Uterus (tissue), 4 donors: ENCODE measurements at regions of chr12 and their contacts with region 1.

Region 1: DNA sequence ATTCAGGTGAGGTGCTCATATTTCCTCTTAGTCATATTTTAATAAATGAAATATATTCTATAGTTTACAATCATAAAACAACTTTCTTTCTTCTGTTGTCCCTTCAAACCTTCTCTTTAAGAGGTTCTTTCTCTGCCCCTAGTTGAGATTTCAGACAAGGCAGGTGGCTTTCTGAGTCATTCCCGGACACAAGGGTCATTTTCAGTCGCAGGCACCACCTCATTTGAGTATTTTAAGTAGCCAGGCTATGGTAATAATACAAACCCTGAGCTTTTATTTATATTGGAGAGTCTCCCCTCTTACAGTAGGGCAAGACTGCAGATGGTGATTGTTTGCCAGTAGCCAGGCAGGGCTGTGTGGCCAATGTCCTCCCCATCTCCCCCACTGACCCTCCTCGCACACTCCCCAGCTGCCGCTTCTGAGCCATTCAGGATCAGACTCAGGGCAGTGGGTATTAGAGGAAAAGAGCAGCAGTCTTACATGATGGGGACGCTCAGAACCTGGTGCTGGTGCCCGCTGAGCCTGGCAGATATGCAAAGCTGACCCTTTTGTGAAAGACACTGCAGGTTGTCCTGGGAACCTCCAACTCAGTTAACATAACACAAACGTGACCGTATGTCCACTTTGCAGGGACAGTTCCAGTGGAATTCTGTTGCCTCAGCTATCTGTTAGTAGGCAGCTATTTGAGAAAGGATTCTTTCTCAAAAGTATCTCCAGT is 101.1 kb upstream of the BCL2L14 start:
- DNase-seq: no peak
- H3K4me3 ChIP-seq: no peak overlapping the region
- H3K27ac ChIP-seq: no peak overlapping the region
- H3K4me1 ChIP-seq: no peaks in the 10 kb centered on the region
- H3K27me3 ChIP-seq: no peaks in the 10 kb centered on the region
- CTCF ChIP-seq: no peak
- POLR2A ChIP-seq: no peak

Region 2: DNA sequence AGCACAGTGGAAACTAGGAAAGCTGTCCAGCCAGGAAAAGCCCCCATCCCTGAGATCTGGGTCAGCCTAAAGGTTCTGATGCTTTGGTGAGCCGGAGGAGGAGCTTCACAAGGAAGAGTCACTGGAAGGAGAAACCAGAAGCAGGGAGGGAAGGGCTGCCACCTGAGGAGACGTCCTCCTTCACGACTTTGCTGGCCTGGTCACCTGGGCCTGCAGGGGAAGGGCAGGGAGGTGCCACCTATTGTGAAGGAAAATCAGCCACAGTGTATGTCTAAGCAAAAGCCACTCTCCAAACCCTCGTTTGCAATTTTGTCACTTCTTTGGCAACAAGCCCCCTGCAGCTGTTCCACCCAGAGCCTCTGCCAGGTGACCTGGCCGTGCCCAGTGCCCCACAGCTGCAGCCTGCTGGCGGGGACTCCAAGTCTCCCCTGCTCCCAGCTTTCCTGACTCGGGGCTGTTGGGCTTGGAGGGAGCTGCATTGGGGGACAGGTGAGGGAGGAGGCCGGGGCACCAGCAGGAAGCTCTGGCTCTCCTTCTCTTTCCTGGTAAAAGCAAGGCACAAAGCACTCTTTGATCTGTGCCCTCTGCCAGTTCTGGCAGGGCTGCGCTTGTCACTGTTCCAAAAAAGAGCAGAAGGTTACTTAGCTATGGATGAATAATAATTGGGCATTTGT is 19.7 kb before region 1 on chr12:
- intact Hi-C with region 1: no loop called
- DNase-seq: peak in 1 of 2 donors; percentile 18
- H3K4me3 ChIP-seq: no peak overlapping the region
- H3K27ac ChIP-seq: no peak overlapping the region
- H3K4me1 ChIP-seq: no peaks in the 10 kb centered on the region
- H3K27me3 ChIP-seq: no peaks in the 10 kb centered on the region
- CTCF ChIP-seq: no peak
- POLR2A ChIP-seq: no peak

Region 3: DNA sequence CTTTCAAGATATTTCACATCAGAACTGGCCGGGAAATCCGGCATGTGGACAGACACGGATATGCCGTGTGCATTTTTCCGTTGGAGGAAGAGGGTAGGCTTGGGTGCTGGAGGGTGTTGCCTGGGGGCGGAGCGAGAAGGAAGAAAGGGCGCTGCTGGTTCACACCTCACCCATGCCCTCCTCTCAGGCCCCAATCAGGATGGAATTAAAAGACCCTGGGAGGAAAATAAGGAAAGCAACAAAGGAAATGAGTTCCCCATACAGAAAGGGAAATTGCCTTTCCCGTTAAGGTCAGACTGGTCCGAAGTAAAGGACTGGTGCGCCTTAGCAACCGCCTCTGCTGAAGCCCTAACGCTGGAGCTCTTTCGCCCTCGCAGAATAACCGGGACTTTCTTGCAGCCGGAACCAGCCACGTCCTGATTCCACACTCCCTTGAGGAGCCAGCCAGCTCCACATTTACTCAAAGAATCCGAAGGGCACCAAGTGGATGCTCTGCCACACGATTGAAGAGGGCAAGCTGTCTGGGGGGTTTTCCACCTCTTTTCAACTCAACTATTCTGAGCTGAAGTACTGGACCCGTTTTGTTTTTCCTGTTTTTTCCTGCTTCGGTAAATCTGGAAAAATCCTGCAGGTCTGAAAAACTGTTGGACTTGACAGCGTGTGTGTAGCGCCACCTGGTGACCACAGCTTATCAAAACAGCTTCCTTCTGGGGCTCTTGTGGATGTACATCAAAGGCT is 63.4 kb after region 1 on chr12:
- intact Hi-C with region 1: no loop called
- DNase-seq: peak; percentile 75 to 77
- H3K4me3 ChIP-seq: peak overlapping the region; percentile 29
- H3K27ac ChIP-seq: peak overlapping the region; percentile 58 to 82
- H3K4me1 ChIP-seq: no peaks in the 10 kb centered on the region
- H3K27me3 ChIP-seq: no peaks in the 10 kb centered on the region
- CTCF ChIP-seq: peak; percentile 81 to 92 (median 88)
- POLR2A ChIP-seq: no peak

Region 4: DNA sequence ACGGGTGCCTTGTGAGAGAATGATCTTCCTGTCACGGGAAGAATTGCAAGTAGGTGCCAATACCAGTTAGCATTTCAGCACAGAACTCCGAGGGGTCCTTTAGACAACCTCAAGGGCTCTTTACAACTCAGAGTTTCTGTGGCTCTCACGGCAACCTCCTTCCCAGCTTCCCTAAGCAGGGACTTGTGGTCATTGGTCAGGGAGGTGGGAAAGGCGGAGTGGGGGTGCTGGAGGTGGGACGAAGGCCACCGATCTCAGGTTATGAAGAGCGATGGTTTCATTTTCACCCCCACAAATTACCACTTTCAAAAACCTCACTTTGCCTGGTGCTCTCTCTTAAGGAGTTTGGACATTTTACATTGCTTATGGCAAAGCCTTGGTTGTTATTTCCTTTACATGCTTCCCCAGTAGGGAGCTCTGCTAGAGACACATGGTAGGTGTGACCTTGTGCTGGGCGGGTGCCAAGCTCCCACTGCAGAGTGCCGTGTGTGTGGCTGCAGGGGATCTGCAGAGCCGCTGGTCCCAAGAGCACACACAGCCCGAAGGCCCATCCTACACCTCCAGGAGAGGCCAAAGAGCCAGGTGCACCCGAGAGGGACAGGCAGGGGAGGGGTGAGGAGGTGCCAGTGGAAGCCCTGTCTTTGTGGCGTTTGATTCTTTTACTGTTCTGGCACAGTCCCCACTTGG is 122.5 kb after region 1 on chr12:
- intact Hi-C with region 1: loop called (anchors 5 kb)
- DNase-seq: no peak
- H3K4me3 ChIP-seq: no peak overlapping the region
- H3K27ac ChIP-seq: no peak overlapping the region
- H3K4me1 ChIP-seq: no peaks in the 10 kb centered on the region
- H3K27me3 ChIP-seq: no peaks in the 10 kb centered on the region
- CTCF ChIP-seq: no peak
- POLR2A ChIP-seq: no peak